ENCODE measurements at regions of chr1 and their contacts with region 1.

Region 1: GRCh38 chr1:224513787-224514209 is 79.2 kb upstream of the WDR26 start:
- DNase-seq: peak; percentile 89
- H3K4me3 Mint-ChIP-seq: no peak overlapping the region
- H3K27ac Mint-ChIP-seq: no peak overlapping the region
- H3K4me1 Mint-ChIP-seq: peaks cover 27% of the 10 kb centered on the region
- H3K27me3 Mint-ChIP-seq: no peaks in the 10 kb centered on the region

Region 2: GRCh38 chr1:224113918-224114786 is 399.6 kb before region 1 on chr1 and contains the start of gene FBXO28:
- CTCF ChIA-PET with region 1: interaction called, 12 read pairs
- POLR2A ChIA-PET with region 1: no interaction called
- DNase-seq: peak; percentile 94
- H3K4me3 Mint-ChIP-seq: peak within 1 kb of the TSS; percentile 90
- H3K27ac Mint-ChIP-seq: peak within 1 kb of the TSS; percentile 89
- H3K4me1 Mint-ChIP-seq: peaks cover 31% of the 10 kb centered on the region
- H3K27me3 Mint-ChIP-seq: peaks cover 9% of the 10 kb centered on the region
- total RNA-seq, gene FBXO28: 25.5 to 30.6 TPM

Region 3: GRCh38 chr1:224503161-224504118 is 10.4 kb before region 1 on chr1:
- CTCF ChIA-PET with region 1: interaction called, 37 read pairs
- POLR2A ChIA-PET with region 1: interaction called, 20 read pairs
- DNase-seq: peak; percentile 32
- H3K4me3 Mint-ChIP-seq: no peak overlapping the region
- H3K27ac Mint-ChIP-seq: no peak overlapping the region
- H3K4me1 Mint-ChIP-seq: peaks cover 56% of the 10 kb centered on the region
- H3K27me3 Mint-ChIP-seq: no peaks in the 10 kb centered on the region

Region 4: DNA sequence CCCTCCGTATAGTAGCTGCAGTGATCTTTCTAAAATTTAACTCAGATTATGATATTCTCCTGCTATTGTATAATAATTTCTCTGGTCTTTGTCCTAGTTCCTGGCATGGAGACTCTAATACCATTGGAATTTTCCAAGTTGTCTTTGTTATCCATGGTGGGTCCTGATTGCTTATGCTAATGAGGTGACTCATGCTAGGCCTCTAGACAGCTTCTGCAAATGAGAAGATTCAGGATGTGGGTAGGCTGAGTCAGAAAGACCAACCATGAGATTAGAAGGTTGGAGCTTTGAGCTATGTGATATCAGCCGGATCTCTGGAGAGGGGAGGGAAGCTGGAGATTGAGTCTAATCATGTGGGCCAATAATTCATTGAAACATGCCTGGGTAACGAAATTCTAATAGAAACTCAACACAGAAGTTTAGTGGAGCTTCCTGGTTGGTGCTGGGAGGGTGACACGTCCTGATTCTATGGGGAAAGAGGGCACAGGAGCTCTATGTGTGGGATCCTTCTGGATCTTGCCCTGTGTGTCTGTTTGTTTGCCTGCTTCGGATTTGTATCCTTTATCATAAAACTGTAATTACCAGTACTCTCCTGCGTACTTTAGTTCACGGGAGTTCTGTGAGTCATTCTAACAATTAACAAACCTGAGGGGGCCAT is 29.1 kb after region 1 on chr1:
- CTCF ChIA-PET with region 1: interaction called, 15 read pairs
- POLR2A ChIA-PET with region 1: interaction called, 3 read pairs
- DNase-seq: peak; percentile 58
- H3K4me3 Mint-ChIP-seq: no peak overlapping the region
- H3K27ac Mint-ChIP-seq: peak overlapping the region; percentile 21
- H3K4me1 Mint-ChIP-seq: peaks cover 27% of the 10 kb centered on the region
- H3K27me3 Mint-ChIP-seq: peaks cover 11% of the 10 kb centered on the region

Region 5: GRCh38 chr1:224559981-224560728 is 46.4 kb after region 1 on chr1:
- CTCF ChIA-PET with region 1: no interaction called
- POLR2A ChIA-PET with region 1: no interaction called
- DNase-seq: no peak
- H3K4me3 Mint-ChIP-seq: no peak overlapping the region
- H3K27ac Mint-ChIP-seq: no peak overlapping the region
- H3K4me1 Mint-ChIP-seq: no peaks in the 10 kb centered on the region
- H3K27me3 Mint-ChIP-seq: no peaks in the 10 kb centered on the region

Region 6: GRCh38 chr1:224644553-224645154 is 130.9 kb after region 1 on chr1:
- CTCF ChIA-PET with region 1: interaction called, 15 read pairs
- POLR2A ChIA-PET with region 1: no interaction called
- DNase-seq: peak; percentile 67
- H3K4me3 Mint-ChIP-seq: no peak overlapping the region
- H3K27ac Mint-ChIP-seq: no peak overlapping the region
- H3K4me1 Mint-ChIP-seq: peaks cover 3% of the 10 kb centered on the region
- H3K27me3 Mint-ChIP-seq: no peaks in the 10 kb centered on the region

Region 7: GRCh38 chr1:224922404-224923164 is 408.8 kb after region 1 on chr1:
- CTCF ChIA-PET with region 1: interaction called, 27 read pairs
- POLR2A ChIA-PET with region 1: no interaction called
- DNase-seq: no peak
- H3K4me3 Mint-ChIP-seq: no peak overlapping the region
- H3K27ac Mint-ChIP-seq: no peak overlapping the region
- H3K4me1 Mint-ChIP-seq: peaks cover 2% of the 10 kb centered on the region
- H3K27me3 Mint-ChIP-seq: peaks cover 13% of the 10 kb centered on the region